Colonic mucosa (tissue), 4 donors: ENCODE measurements at regions of chr14 and their contacts with region 1.

Region 1: GRCh38 chr14:103546652-103547454 is 15.6 kb downstream of the BAG5 start:
- DNase-seq: peak; percentile 83
- H3K4me3 ChIP-seq: no peak overlapping the region
- H3K27ac ChIP-seq: no peak overlapping the region
- H3K4me1 ChIP-seq: peaks cover 14% of the 10 kb centered on the region
- H3K27me3 ChIP-seq: no peaks in the 10 kb centered on the region
- CTCF ChIP-seq: peak; percentile 88

Region 2: DNA sequence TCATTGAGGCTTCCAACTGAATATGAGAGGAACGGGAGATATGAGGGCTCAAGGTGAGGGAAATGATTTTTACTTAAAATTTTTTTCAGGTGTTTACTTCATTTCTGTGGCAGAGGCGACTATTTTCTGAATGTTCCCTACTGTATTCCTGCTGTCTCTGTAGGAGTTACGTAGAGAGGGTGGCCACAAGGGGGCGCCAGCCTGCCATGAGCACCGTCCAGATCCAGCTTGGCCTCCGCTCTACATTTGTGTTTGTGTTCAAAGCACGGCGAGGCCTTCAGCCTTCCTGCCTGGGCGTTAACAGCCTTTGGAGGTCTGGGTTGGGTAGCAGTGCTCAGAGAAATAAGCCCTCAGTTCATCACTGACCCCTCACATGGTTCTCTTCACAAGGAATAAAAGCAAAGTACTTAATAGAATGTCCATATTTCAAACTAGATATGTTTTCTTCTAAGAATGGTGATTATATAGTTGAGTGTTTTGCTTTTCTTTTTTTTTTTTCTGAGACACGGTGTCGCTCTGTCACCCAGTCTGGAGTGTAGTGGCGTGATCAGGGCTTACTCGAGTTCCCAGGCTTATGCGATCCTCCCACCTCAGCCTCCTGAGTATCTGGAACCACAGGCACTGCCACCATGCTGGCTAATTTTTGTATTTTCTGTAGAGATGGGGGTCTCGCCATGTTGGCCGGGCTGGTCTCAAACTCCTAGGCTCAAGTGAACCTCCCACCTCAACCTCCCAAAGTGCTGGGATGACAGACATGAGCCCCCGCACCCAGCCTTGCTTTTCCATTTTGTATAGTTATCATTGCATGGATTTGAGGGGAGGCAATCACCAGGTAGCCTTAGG is 46.5 kb before region 1 on chr14:
- intact Hi-C with region 1: loop called (anchors 5 kb)
- DNase-seq: peak; percentile 89
- H3K4me3 ChIP-seq: no peak overlapping the region
- H3K27ac ChIP-seq: no peak overlapping the region
- H3K4me1 ChIP-seq: no peaks in the 10 kb centered on the region
- H3K27me3 ChIP-seq: no peaks in the 10 kb centered on the region
- CTCF ChIP-seq: peak; percentile 90

Region 3: GRCh38 chr14:103517721-103518421 is 29.0 kb before region 1 on chr14:
- intact Hi-C with region 1: loop called (anchors 2 kb)
- DNase-seq: no peak
- H3K4me3 ChIP-seq: no peak overlapping the region
- H3K27ac ChIP-seq: no peak overlapping the region
- H3K4me1 ChIP-seq: peaks cover 9% of the 10 kb centered on the region
- H3K27me3 ChIP-seq: no peaks in the 10 kb centered on the region
- CTCF ChIP-seq: no peak

Region 4: GRCh38 chr14:103624859-103625258 is 78.0 kb after region 1 on chr14:
- intact Hi-C with region 1: no loop called
- DNase-seq: peak; percentile 71
- H3K4me3 ChIP-seq: no peak overlapping the region
- H3K27ac ChIP-seq: no peak overlapping the region
- H3K4me1 ChIP-seq: peaks cover 7% of the 10 kb centered on the region
- H3K27me3 ChIP-seq: no peaks in the 10 kb centered on the region
- CTCF ChIP-seq: no peak